BJ (cell line): ENCODE measurements at regions of chr21 and their contacts with region 1.

Region 1: DNA sequence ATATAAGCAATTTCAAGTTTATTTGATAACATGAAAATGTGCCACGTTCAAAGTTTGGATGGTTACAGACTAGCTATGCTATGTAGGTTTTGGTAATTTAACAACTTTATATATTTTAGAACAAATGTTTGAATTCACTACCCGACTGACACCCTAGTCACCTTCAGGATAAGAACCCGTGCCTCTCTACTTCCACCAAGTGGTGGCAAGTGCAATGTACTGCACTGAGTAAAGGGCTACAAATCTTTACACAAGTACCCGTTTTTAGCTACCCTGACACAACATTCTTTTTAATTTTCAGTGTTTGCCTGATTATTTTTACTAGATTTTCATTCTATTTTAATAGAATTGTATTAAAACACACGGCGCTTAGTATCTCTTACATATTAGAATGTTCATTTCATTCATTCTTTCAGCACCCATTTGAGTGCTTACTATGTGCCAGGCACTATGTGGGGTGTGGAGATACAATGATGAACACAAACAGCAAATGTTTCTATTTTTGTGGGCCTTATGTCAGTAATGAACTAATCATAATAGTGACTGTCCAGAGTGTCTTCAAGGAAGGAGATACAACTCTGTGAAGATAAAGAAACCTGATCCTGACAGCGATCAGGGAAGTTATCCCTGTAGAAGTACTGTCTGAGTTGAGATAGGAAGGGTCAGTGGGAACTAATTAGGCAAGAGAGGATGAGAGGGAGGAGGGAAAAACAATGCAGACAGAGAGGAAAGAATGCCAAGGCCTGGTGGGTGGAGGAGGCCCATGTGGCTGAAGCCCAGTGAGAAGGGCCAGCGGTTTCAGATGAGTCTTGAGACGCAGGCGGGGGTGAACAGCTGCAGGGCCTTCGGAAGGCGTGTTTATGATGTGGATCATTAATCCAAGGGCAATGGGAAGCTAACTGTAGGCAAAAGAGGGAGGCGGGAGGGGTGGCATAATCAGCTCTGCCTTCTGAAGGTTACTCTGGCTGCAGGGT is 3.8 kb downstream of the LCA5L start:
- DNase-seq: no peak
- H3K4me3 ChIP-seq: no peak overlapping the region
- H3K27me3 ChIP-seq: no peaks in the 10 kb centered on the region
- CTCF ChIP-seq: peak; percentile 86

Region 2: DNA sequence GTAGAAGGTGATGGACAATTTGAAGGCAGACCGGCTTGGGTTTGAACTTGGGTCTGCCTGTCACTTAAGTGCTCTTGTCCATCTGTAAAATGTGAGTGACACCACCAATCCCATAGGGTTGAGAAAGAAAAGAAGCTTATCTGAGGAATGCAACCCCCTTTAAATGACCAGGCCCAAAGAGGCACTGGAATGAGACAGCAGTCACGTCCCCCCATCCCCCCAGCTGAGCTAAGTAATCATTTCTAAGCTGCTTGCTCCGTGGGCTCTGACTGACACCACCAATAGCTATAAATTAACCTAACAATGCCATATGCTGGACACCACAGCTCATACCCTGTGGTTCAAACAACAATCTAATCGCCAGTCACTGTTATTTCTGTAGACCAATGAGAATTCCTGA is 11.3 kb before region 1 on chr21:
- CTCF ChIA-PET with region 1: interaction called, 25 read pairs
- POLR2A ChIA-PET with region 1: no interaction called
- DNase-seq: no peak
- H3K4me3 ChIP-seq: no peak overlapping the region
- H3K27me3 ChIP-seq: no peaks in the 10 kb centered on the region
- CTCF ChIP-seq: no peak

Region 3: GRCh38 chr21:39885119-39885848 is 443.5 kb after region 1 on chr21:
- CTCF ChIA-PET with region 1: no interaction called
- POLR2A ChIA-PET with region 1: no interaction called
- DNase-seq: no peak
- H3K4me3 ChIP-seq: no peak overlapping the region
- H3K27me3 ChIP-seq: no peaks in the 10 kb centered on the region
- CTCF ChIP-seq: no peak